ENCODE measurements at regions of chr19 and their contacts with region 1.

Region 1: GRCh38 chr19:5622463-5623396 is at the starts of genes SAFB and SAFB2:
- DNase-seq: peak; percentile 100
- H3K4me3 Mint-ChIP-seq: peak within 1 kb of the TSS; percentile 100
- H3K27ac Mint-ChIP-seq: peak within 1 kb of the TSS; percentile 100
- H3K4me1 Mint-ChIP-seq: peaks cover 41% of the 10 kb centered on the region
- H3K27me3 Mint-ChIP-seq: no peaks in the 10 kb centered on the region
- total RNA-seq, gene SAFB: 132 and 143 TPM in 2 replicates
- total RNA-seq, gene SAFB2: 96.1 and 96.7 TPM in 2 replicates

Region 2: GRCh38 chr19:5651361-5651760 is 28.6 kb after region 1 on chr19:
- intact Hi-C with region 1: no loop called
- DNase-seq: no peak
- H3K4me3 Mint-ChIP-seq: no peak overlapping the region
- H3K27ac Mint-ChIP-seq: no peak overlapping the region
- H3K4me1 Mint-ChIP-seq: no peaks in the 10 kb centered on the region
- H3K27me3 Mint-ChIP-seq: no peaks in the 10 kb centered on the region

Region 3: DNA sequence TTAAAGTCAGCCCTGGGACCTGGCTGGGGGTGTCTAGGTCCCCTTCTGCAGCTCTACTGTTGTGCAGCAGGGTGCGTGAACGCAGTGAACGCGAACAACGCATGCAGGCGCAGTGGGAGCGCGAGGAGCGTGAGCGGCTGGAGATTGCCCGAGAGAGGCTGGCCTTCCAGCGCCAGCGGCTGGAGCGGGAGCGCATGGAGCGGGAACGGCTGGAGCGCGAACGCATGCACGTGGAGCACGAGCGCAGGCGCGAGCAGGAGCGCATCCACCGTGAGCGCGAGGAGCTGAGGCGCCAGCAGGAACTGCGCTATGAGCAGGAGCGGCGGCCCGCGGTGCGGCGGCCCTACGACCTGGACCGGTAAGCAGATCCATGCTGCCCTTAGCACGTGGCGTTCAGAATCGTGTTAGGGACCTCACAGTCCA is 38.7 kb after region 1 on chr19:
- intact Hi-C with region 1: no loop called
- DNase-seq: no peak
- H3K4me3 Mint-ChIP-seq: no peak overlapping the region
- H3K27ac Mint-ChIP-seq: no peak overlapping the region
- H3K4me1 Mint-ChIP-seq: peaks cover 5% of the 10 kb centered on the region
- H3K27me3 Mint-ChIP-seq: no peaks in the 10 kb centered on the region

Region 4: DNA sequence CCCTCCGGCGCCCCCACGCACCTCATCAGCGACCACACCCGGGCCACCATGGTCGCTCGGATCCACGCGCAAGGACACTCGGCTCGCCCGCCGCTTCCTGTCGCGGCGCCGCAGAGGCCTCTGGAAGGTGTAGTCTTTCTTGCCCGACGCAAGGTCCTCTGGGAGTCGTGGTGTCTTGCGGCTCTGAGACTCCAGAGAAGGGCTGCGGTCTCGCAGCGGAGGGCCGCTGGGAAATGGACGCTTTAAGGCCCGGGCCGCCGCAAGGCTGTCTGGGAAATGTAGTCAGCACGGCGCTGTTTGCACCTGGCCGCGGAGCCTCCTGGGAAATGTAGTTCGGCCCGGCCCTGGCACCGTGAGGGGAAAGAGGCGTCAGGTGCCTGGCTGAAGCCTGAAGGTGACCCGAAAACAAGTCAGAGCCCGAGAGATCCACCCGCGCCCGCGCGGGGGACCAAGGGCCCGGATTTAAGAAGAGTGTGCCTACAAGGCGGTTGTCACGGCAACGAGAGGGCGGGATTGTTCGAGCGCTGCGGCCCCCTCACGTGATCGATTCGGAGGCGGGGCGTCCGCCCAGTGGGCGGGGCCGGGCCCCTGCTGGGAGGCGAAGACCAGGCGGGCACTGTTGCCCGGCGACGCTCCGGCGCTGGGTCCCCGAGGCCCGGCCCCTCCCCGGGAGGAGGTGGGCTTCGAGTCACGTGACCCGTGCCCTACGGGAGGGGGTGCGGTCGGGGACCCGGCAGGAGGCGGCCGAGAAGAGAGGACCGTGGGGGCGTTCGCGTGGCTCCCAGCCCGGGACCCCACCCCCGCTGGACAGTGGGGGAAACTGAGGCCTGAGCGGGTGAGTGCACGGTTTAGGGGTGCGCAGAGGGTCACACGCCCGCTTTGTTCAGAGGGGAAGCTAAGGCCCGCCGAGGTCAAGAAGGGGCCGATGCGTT is 58.0 kb after region 1 on chr19 and contains the starts of genes HSD11B1L and MICOS13:
- intact Hi-C with region 1: loop called (anchors 1 kb)
- DNase-seq: peak; percentile 98
- H3K4me3 Mint-ChIP-seq: peak within 1 kb of the TSS; percentile 95
- H3K27ac Mint-ChIP-seq: peak within 1 kb of the TSS; percentile 87
- H3K4me1 Mint-ChIP-seq: peaks cover 14% of the 10 kb centered on the region
- H3K27me3 Mint-ChIP-seq: no peaks in the 10 kb centered on the region
- total RNA-seq, gene HSD11B1L: 2.0 and 2.5 TPM in 2 replicates
- total RNA-seq, gene MICOS13: 54.3 and 60.9 TPM in 2 replicates

Region 5: GRCh38 chr19:5690125-5690954 is 67.6 kb after region 1 on chr19 and contains the start of gene RPL36:
- intact Hi-C with region 1: loop called (anchors 2 kb)
- DNase-seq: peak; percentile 99
- H3K4me3 Mint-ChIP-seq: peak within 1 kb of the TSS; percentile 94
- H3K27ac Mint-ChIP-seq: peak within 1 kb of the TSS; percentile 95
- H3K4me1 Mint-ChIP-seq: peaks cover 15% of the 10 kb centered on the region
- H3K27me3 Mint-ChIP-seq: no peaks in the 10 kb centered on the region
- total RNA-seq, gene RPL36: 996 and 1,031 TPM in 2 replicates

Region 6: DNA sequence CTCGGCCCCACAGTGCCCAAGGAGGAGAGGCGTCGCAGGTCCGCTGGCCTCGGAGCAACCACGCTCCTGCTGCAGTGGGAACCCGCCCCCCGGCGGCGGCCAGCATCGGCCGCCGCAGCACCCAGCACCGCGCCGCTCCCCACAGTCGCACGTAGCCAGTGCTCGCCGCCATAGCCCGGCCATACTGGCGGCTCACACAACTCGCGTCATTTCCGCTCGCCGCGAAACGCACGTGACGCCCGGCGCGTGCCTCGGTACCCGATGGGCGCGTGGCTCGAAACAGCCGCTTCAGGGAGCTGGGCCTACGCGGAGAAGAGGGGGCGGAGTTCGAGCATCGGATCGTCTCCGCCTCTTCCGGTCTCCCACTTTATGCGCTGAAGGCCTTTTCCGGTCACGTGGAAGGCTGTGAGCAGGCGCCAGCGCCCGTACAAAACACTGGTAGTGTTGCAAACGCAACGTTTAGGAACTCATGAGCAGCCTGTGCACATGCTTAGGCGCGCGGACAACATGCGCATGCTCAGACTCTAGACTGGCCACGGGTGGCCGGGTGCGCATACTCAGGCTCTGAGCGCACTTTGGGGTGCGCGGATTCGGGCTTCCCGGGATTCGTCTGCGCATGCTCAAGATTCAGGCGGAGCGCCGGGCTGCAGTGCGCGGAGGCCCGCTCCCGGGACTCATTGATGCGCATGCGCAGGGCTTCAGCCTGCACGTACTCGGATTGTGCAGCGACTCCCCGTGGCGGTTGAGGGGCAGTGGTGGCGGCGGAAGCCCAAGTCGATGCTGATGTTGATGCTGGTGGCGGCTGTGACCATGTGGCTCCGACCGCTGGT is 97.4 kb after region 1 on chr19 and contains the starts of genes CATSPERD and LONP1:
- intact Hi-C with region 1: loop called (anchors 1 kb)
- DNase-seq: peak; percentile 97
- H3K4me3 Mint-ChIP-seq: peak within 1 kb of the TSS; percentile 93
- H3K27ac Mint-ChIP-seq: peak within 1 kb of the TSS; percentile 94
- H3K4me1 Mint-ChIP-seq: peaks cover 20% of the 10 kb centered on the region
- H3K27me3 Mint-ChIP-seq: no peaks in the 10 kb centered on the region
- total RNA-seq, gene CATSPERD: not detected in 2 replicates
- total RNA-seq, gene LONP1: 192 and 196 TPM in 2 replicates

Region 7: GRCh38 chr19:5790573-5791520 is 168.1 kb after region 1 on chr19 and contains the start of gene DUS3L:
- intact Hi-C with region 1: loop called (anchors 1 kb)
- DNase-seq: peak; percentile 95
- H3K4me3 Mint-ChIP-seq: peak within 1 kb of the TSS; percentile 98
- H3K27ac Mint-ChIP-seq: peak within 1 kb of the TSS; percentile 100
- H3K4me1 Mint-ChIP-seq: peaks cover 5% of the 10 kb centered on the region
- H3K27me3 Mint-ChIP-seq: no peaks in the 10 kb centered on the region
- total RNA-seq, gene DUS3L: 74.0 and 84.3 TPM in 2 replicates